ENCODE measurements at regions of chr11 and their contacts with region 1.

Region 1: DNA sequence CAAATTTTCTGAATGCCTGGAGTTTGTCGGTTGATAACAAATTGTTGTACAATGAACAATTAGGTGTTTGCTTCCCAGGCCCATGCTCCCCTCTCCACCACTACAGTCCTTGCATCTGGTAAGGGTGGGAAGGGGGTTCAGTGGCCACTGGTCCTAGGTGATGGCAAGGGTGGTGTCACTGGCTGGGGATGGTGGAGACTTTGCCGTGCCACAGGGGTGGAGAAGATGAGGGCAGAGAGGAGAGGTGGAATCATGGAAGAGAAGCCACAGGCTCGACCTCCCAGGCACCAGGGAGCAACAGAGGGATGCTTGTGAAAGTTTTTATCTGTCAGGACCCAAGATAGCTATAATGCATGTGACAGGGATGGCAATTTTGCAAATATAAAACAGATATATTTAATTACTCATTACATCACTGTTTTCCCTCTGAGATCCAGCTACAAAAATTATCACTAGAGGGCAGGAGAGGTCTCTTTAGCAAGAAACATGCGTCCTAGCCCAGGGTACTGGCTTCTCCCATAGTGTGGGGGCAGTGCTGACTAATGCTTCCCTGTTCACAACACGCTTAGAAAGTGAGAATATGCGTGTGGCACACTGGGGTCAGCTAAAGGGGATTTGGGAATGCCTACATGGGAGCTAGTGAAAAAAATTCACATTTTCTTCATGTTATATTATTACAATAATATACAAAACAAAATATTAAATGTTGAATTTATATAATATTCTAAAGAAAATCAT is 49.0 kb upstream of the AMPD3 start:
- DNase-seq: peak in 2 of 3 donors; percentile 70 to 74
- ATAC-seq: peak; percentile 86 to 89
- H3K4me3 ChIP-seq: no peak overlapping the region
- H3K27ac ChIP-seq: no peak overlapping the region
- H3K4me1 ChIP-seq: peaks cover 7% of the 10 kb centered on the region
- H3K27me3 ChIP-seq: no peaks in the 10 kb centered on the region

Region 2: GRCh38 chr11:10653926-10654810 is 248.1 kb after region 1 on chr11:
- intact Hi-C with region 1: loop called in 1 of 4 experiments (anchors 10 kb)
- DNase-seq: no peak
- ATAC-seq: peak; percentile 60 to 73
- H3K4me3 ChIP-seq: no peak overlapping the region
- H3K27ac ChIP-seq: no peak overlapping the region
- H3K4me1 ChIP-seq: peaks cover 15% of the 10 kb centered on the region
- H3K27me3 ChIP-seq: no peaks in the 10 kb centered on the region

Measured in right cardiac atrium (tissue), 5 donors.